SK-N-SH (cell line): ENCODE measurements at regions of chr3 and their contacts with region 1.

Region 1: GRCh38 chr3:12994607-12995388 is 78.4 kb downstream of the IQSEC1 start:
- DNase-seq: peak; percentile 97
- H3K4me3 ChIP-seq: peak overlapping the region; percentile 67 to 85
- H3K27ac ChIP-seq: peak overlapping the region; percentile 44 to 78; a peak in 2 of 4 replicates
- H3K4me1 ChIP-seq: peaks cover 4 to 21% of the 10 kb centered on the region in 2 experiments; a peak in 1 of 4 replicates
- H3K27me3 ChIP-seq: no peaks in the 10 kb centered on the region
- CTCF ChIP-seq: peak; percentile 83
- EP300 ChIP-seq: 0 out of 4 replicates have a peak, but pooled peaks of 1 of the 2 experiments have one; percentile 15
- RAD21 ChIP-seq: peak; percentile 69

Region 2: DNA sequence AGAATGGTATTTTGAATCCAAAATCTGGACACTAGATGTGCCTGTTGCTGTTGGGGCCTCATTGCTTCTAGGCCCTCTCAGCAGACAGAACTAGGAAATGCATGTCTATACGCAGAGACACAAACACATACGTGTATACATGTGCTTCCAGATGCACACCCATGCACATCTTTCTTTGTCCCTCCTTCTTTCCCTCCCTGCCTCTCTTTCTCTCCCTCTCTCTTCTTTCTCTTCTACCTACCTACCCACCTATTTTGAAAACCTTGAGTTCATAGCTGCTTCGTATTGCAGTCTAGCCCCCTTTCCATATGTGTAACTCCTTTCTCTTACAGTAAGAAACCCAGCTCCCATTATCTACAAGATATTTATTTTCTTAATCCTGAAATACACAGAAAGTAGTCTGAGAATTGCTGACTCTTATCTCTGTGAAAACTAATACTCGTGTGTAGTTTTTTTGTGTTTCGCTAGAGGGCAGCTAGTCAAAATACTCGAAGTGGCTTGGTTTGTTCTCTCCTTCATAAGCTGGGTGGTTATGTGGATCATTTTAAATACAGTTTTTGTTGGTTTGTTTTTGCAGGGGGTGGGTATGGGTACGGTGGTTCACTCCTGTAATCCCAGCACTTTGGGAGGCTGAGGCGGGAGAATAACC is 171.9 kb before region 1 on chr3:
- CTCF ChIA-PET with region 1: no interaction called
- POLR2A ChIA-PET with region 1: no interaction called
- DNase-seq: no peak
- H3K4me3 ChIP-seq: no peak overlapping the region
- H3K27ac ChIP-seq: no peak overlapping the region
- H3K4me1 ChIP-seq: no peaks in the 10 kb centered on the region
- H3K27me3 ChIP-seq: no peaks in the 10 kb centered on the region
- CTCF ChIP-seq: peak; percentile 35
- EP300 ChIP-seq: no peak
- RAD21 ChIP-seq: no peak

Region 3: DNA sequence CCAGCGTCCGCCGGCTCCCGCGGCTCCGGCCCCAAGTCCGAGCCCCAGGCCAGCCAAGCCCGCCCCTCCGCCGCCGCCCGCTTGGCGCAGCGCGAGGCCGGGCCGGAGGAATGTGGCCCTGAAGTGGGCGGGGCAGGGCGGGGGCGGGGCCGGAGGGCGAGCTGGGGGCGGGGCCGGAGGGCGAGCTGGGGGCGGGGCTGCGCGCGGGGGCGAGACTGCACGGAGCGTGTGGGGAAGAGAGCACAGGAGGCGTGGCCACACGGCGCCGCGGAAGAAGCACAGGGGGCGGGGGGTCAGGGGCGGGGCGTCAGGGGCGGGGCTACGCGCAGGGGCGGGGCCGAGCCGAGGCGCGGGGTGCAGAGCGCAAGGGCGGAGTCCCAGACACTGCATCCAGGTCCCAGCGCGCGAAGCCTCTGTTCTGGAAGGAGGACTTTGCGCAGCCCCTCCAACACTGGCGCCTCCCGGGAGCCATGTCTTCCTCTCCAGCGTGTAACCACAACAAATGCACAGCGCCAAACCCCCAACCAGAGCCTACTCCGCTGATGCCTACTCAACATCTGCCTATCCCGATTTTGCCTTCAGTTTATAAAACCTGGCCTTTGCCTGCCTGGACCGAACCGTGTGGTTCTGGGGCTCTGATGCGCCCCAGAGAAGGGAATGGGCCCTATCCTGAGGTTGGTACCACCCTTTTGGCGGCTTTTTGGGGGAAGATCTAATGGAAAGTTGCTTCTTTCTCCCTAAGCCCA is 27.0 kb before region 1 on chr3:
- CTCF ChIA-PET with region 1: interaction called, 20 read pairs
- POLR2A ChIA-PET with region 1: no interaction called
- DNase-seq: peak; percentile 100
- H3K4me3 ChIP-seq: peak overlapping the region; percentile 65 to 82
- H3K27ac ChIP-seq: peak overlapping the region in 1 of 2 experiments; percentile 21; a peak in 2 of 4 replicates
- H3K4me1 ChIP-seq: peaks cover 0 to 56% of the 10 kb centered on the region in 2 experiments; a peak in 2 of 4 replicates
- H3K27me3 ChIP-seq: no peaks in the 10 kb centered on the region
- CTCF ChIP-seq: no peak
- EP300 ChIP-seq: no peak
- RAD21 ChIP-seq: no peak

Region 4: DNA sequence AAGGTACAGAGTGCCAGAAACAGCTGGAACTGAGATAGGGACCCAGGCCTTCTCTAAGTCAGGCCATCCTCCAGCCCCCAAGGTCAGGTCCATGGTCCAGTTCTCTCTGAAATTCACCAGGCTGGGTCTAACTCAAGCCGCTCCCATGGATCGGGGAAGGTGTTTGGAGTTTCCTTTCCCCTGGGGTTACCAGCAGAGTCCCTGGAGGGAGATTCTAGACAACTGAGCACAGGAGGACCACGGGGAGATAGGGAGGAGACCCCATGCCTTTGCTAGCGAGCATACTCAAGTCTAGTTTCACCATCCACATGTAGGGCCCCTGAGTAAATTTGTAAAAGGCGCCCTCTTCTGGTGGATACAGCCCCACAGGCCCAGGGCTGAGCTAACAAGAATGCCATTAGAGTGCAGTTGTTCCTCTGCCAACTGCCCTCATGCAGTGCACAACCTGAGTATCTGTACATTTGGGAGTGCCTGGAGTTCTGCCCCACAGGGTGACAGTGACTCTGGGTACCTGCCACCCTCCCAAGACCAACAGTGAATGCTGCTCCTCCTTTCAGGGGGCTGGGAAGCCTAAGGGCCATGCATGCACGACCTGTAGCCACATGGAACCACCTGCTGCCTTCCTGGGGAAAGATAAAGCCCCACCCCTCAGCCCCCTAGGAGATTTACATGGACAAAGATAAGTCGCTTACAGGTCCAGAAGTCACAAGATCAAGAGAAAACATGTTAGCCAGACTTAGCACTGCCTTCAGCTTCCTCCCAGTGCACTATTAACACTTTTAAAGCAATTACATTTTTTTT is 10.6 kb before region 1 on chr3:
- CTCF ChIA-PET with region 1: interaction called, 29 read pairs
- POLR2A ChIA-PET with region 1: interaction called, 3 read pairs
- DNase-seq: peak; percentile 80
- H3K4me3 ChIP-seq: peak overlapping the region in 1 of 2 experiments; percentile 7; a peak in 1 of 4 replicates
- H3K27ac ChIP-seq: no peak overlapping the region; a peak in 1 of 4 replicates
- H3K4me1 ChIP-seq: peaks cover 0 to 27% of the 10 kb centered on the region in 2 experiments; a peak in 1 of 4 replicates
- H3K27me3 ChIP-seq: no peaks in the 10 kb centered on the region
- CTCF ChIP-seq: peak; percentile 77
- EP300 ChIP-seq: no peak
- RAD21 ChIP-seq: peak; percentile 84

Region 5: DNA sequence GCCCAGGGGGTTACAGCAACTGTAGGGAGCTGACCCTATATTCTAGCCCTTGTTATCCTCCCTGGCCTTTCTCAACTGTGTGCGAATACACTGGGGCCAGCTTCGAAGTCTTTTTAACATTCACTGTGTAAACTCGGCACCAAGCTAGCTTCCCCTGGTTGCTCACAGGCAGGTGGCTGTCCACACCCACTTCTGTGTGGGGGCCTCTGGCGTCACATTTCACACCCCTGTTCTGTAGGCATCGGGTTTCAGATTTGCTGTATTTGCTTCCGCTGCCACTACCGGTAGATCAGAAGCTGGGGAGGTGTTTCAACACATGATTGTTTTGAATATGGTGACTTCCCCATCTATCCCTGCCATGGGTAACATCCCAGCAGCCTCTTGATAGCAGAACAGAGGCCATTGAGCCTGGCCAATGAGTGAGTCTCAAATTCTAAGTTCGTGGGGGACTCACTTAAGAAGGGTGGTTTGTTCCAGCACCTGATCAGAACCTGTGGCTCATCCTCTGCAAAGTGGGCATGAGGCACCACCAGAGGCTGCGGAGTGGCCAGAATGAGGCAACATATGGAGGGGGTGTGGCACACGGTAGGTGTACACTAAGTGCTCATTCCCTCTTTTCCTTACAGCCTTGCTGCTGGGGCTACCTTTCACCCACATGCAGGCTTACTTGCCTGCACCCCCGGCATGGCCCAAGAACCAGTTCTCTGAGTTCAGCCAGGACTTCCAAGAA is 16.9 kb after region 1 on chr3:
- CTCF ChIA-PET with region 1: interaction called, 42 read pairs
- POLR2A ChIA-PET with region 1: interaction called, 3 read pairs
- DNase-seq: no peak
- H3K4me3 ChIP-seq: no peak overlapping the region
- H3K27ac ChIP-seq: no peak overlapping the region; a peak in 1 of 4 replicates
- H3K4me1 ChIP-seq: peaks cover 0 to 70% of the 10 kb centered on the region in 2 experiments; a peak in 1 of 4 replicates
- H3K27me3 ChIP-seq: no peaks in the 10 kb centered on the region
- CTCF ChIP-seq: no peak
- EP300 ChIP-seq: no peak
- RAD21 ChIP-seq: no peak

Region 6: DNA sequence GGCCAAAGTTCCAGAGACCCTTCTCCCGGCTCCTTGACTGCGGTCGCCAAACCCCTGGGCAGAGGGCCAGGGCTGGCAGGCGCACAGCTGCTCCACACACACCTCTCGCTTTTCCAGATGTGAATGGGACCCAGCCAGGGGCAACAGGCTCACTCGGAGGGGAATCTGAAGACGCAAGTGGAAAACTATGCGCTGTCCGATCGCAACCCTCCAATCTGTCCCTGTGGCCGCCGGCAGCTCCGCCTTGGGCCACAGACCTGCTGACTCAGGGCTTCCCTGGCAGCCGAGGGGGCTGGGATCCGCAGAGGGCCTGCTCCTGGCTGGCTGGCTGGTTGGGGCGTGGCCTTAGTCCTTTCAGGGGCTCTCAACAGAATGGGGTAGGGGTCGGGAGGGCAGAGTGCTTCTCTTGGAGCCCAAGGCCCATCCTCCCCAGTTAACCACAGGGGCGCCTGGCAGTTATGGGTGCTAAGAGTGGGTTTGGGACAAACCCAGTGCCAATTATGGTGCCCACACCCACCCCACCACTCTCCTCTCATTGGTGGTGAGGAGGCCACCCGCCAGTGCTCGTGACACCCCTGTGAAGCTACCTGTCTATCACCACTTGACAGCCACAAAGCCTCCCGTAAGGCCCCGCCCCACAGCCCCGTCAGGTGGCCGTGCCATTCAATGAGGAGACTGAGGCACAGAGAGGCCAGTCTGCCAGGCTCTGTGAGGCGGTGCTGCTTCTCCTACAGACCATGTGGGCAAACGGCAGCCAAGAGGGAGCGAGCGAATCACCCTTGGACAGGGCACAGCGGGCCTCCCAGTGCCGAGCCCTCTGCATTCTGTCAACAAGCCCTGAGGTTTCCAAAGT is 24.7 kb after region 1 on chr3:
- CTCF ChIA-PET with region 1: interaction called, 42 read pairs
- POLR2A ChIA-PET with region 1: interaction called, 3 read pairs
- DNase-seq: peak; percentile 70
- H3K4me3 ChIP-seq: no peak overlapping the region
- H3K27ac ChIP-seq: peak overlapping the region in 1 of 2 experiments; percentile 94; a peak in 2 of 4 replicates
- H3K4me1 ChIP-seq: peaks cover 29 to 88% of the 10 kb centered on the region in 2 experiments
- H3K27me3 ChIP-seq: no peaks in the 10 kb centered on the region
- CTCF ChIP-seq: no peak
- EP300 ChIP-seq: peak in 1 of 2 experiments; percentile 29; a peak in 1 of 4 replicates
- RAD21 ChIP-seq: no peak

Region 7: GRCh38 chr3:13030684-13031083 is 35.9 kb after region 1 on chr3:
- CTCF ChIA-PET with region 1: no interaction called
- POLR2A ChIA-PET with region 1: no interaction called
- DNase-seq: no peak
- H3K4me3 ChIP-seq: no peak overlapping the region
- H3K27ac ChIP-seq: no peak overlapping the region; a peak in 1 of 4 replicates
- H3K4me1 ChIP-seq: peaks cover 0 to 31% of the 10 kb centered on the region in 2 experiments; a peak in 2 of 4 replicates
- H3K27me3 ChIP-seq: no peaks in the 10 kb centered on the region
- CTCF ChIP-seq: no peak
- EP300 ChIP-seq: no peak
- RAD21 ChIP-seq: no peak